Psoas muscle (tissue), 8 donors: ENCODE measurements at regions of chr6 and their contacts with region 1.

Region 1: DNA sequence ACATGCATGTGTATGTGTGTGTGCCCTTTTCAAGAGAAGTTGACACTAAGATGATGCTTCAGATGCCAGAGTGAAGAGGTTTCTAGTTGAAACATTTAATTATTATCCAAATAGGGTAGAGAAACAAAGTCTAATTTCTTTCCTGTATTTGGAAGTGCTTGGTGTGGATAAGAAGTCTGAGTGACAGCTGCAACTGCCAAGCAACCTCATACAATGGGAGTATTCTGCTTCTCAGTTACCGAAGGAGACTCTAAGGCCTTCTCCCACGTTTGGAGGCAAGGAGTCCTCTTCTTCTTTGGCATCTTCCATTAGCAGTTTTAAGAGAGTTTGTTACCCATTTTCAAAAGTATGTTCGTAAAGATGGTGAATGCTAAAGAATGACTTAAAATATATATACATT is 82.4 kb downstream of the HDGFL1 start:
- DNase-seq: no peak
- ATAC-seq: no peak
- H3K4me3 ChIP-seq: no peak overlapping the region
- H3K27ac ChIP-seq: no peak overlapping the region
- H3K4me1 ChIP-seq: no peaks in the 10 kb centered on the region
- H3K27me3 ChIP-seq: no peaks in the 10 kb centered on the region
- CTCF ChIP-seq: no peak

Region 2: DNA sequence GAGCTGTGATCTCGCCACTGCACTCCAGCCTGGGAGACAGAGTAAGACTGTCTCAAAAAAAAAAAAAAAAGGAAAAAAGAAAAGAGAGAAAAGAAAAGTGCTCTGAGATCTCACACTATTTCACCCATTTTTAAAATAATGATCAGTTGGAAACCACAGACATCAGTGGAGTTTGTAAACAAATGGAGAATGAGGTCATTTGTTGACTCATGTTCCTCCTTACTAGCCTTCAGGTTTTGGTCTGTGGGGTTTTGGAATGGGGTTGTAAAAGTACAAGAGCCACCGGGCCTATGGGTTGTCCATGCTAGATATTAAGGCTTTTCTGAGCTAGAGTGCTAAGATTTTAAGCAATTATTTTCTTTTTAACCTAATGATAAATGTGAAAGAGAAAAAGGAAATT is 250.5 kb before region 1 on chr6:
- intact Hi-C with region 1: no loop called
- DNase-seq: no peak
- ATAC-seq: no peak
- H3K4me3 ChIP-seq: no peak overlapping the region
- H3K27ac ChIP-seq: no peak overlapping the region
- H3K4me1 ChIP-seq: no peaks in the 10 kb centered on the region
- H3K27me3 ChIP-seq: no peaks in the 10 kb centered on the region
- CTCF ChIP-seq: no peak

Region 3: DNA sequence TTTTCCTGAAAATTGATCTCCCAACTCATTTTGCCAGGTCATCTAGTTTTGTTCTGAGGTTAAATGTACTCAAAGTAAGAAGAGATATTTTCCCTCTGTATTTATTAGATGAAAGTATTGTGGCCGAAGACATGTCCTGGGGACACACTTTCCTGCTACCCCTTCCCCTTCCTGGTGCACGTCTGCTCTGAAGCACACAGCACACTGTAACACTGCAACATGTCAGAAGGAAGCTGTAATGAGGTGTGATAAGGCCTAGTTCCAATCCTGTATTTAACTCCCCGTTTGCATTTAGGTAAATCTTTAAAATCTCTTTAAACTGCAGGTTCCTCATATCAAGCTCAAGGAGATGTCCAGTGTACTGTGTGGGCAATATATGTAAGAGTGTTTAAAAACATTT is 17.0 kb after region 1 on chr6:
- intact Hi-C with region 1: loop called in 1 of 2 experiments (anchors 1 kb)
- DNase-seq: no peak
- ATAC-seq: no peak
- H3K4me3 ChIP-seq: no peak overlapping the region
- H3K27ac ChIP-seq: no peak overlapping the region
- H3K4me1 ChIP-seq: peaks cover 7% of the 10 kb centered on the region
- H3K27me3 ChIP-seq: no peaks in the 10 kb centered on the region
- CTCF ChIP-seq: no peak